ENCODE measurements at regions of chr22 and their contacts with region 1.

Region 1: DNA sequence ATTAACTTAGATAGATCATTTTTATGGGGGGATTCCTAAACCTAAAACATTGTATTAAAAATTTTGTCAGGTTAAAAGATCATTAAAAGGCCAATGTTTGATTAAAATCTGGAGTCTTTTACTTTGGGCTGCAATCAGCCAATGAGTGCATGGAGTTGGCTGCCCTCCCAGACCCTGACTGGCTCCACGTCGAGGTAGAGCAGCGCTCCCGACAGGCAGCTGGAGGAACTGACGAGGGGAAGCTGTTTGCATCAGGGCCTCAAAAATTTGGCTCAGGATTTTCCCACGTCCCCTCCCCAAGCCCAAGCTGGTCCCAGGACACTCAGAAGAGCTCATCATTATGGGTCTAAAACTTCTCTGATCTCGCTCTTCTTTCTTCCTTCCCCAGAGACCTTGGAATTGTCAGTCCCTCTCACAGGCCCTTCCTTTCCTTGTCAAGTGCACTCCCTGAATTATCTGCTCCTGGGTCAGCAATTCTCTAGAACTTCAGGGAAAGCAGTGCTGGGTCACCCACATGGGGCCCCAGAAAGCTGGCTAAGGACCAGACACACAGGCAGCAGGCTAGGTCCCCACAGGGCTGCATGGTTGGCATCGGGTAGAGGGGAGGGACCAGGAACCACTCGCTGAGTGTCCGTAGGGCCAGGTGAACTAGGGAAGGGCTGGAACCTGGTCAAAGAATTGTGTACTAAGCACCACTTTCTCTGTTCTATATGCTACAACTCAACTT is 119.6 kb upstream of the IGLL5 start:
- DNase-seq: no peak

Region 2: GRCh38 chr22:22702237-22703202 is 65.5 kb before region 1 on chr22:
- intact Hi-C with region 1: loop called (anchors 10 kb)
- DNase-seq: peak in 3 of 42 donors; percentile 1 to 10 (median 8)

Region 3: DNA sequence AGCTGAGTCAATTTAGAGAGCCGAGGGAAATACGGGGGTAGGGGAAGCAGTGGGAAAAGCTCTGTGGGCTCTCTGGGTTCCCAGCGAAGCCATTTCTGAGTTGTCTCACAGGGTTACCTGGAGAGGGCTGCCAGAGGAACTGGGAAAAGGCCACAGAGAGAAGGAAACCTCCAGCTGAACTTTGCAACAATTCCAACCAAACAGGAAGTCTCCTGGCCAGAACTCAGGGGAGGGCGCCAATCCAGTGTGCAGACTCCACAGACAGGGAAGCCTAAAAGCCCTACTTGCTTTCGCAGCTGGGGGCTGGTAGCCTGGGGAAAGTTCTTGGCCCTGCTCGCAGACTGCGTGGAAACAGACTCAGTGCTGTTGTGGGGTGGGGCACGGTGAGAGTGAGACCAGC is 279.2 kb after region 1 on chr22:
- intact Hi-C with region 1: no loop called
- DNase-seq: peak in 3 of 42 donors; percentile 34 to 39 (median 35)